ENCODE measurements at regions of chr12 and their contacts with region 1.

Region 1: GRCh38 chr12:55926738-55927587 is 731 bp downstream of the PYM1 start:
- DNase-seq: peak; percentile 97
- ATAC-seq: peak; percentile 43
- H3K4me3 Mint-ChIP-seq: peak overlapping the region; percentile 95
- H3K27ac Mint-ChIP-seq: peak overlapping the region; percentile 99
- H3K4me1 Mint-ChIP-seq: peaks cover 43% of the 10 kb centered on the region
- H3K27me3 Mint-ChIP-seq: no peaks in the 10 kb centered on the region

Region 2: GRCh38 chr12:55829967-55830600 is 96.9 kb before region 1 on chr12:
- CTCF ChIA-PET with region 1: interaction called, 28 read pairs
- POLR2A ChIA-PET with region 1: interaction called, 50 read pairs
- DNase-seq: peak; percentile 55
- ATAC-seq: peak; percentile 35
- H3K4me3 Mint-ChIP-seq: peak overlapping the region; percentile 99
- H3K27ac Mint-ChIP-seq: peak overlapping the region; percentile 97
- H3K4me1 Mint-ChIP-seq: peaks cover 41% of the 10 kb centered on the region
- H3K27me3 Mint-ChIP-seq: no peaks in the 10 kb centered on the region

Region 3: GRCh38 chr12:55915482-55915859 is 11.5 kb before region 1 on chr12:
- CTCF ChIA-PET with region 1: interaction called, 28 read pairs
- POLR2A ChIA-PET with region 1: interaction called, 34 read pairs
- DNase-seq: no peak
- ATAC-seq: no peak
- H3K4me3 Mint-ChIP-seq: no peak overlapping the region
- H3K27ac Mint-ChIP-seq: peak overlapping the region; percentile 15
- H3K4me1 Mint-ChIP-seq: peaks cover 35% of the 10 kb centered on the region
- H3K27me3 Mint-ChIP-seq: no peaks in the 10 kb centered on the region

Region 4: DNA sequence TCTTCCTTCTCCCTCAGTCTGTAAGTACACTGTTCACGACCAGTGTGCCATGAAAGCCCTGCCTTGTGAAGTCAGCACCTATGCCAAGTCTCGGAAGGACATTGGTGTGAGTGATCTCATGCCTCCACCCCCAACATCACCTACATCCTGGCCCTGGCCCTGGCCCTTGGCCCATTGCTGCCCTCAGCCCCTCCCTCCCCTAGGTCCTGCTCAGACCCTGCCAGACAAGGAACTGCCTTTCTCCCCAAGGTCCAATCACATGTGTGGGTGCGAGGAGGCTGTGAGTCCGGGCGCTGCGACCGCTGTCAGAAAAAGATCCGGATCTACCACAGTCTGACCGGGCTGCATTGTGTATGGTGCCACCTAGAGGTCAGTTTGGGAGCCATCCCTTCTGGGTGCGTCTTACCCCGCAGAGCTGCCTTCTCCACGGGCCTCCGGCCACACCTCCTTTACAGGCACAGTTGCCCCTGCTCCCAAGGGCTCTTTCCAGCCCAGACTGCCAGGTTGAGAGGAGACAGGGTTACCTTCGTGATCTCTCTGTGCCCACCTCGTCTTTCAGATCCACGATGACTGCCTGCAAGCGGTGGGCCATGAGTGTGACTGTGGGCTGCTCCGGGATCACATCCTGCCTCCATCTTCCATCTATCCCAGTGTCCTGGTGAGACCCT is 13.2 kb after region 1 on chr12:
- CTCF ChIA-PET with region 1: interaction called, 75 read pairs
- POLR2A ChIA-PET with region 1: interaction called, 139 read pairs
- DNase-seq: peak; percentile 90
- ATAC-seq: peak; percentile 93
- H3K4me3 Mint-ChIP-seq: no peak overlapping the region
- H3K27ac Mint-ChIP-seq: peak overlapping the region; percentile 69
- H3K4me1 Mint-ChIP-seq: peaks cover 67% of the 10 kb centered on the region
- H3K27me3 Mint-ChIP-seq: no peaks in the 10 kb centered on the region

Region 5: GRCh38 chr12:56020423-56021184 is 93.6 kb after region 1 on chr12 and contains the start of gene IKZF4:
- CTCF ChIA-PET with region 1: no interaction called
- POLR2A ChIA-PET with region 1: no interaction called
- DNase-seq: peak; percentile 42
- ATAC-seq: peak; percentile 37
- H3K4me3 Mint-ChIP-seq: peak within 1 kb of the TSS; percentile 88
- H3K27ac Mint-ChIP-seq: peak within 1 kb of the TSS; percentile 96
- H3K4me1 Mint-ChIP-seq: peaks cover 53% of the 10 kb centered on the region
- H3K27me3 Mint-ChIP-seq: no peaks in the 10 kb centered on the region
- total RNA-seq, gene IKZF4: 19.9 to 20.7 TPM

Region 6: GRCh38 chr12:56078990-56079664 is 152.2 kb after region 1 on chr12:
- CTCF ChIA-PET with region 1: no interaction called
- POLR2A ChIA-PET with region 1: no interaction called
- DNase-seq: peak; percentile 64
- ATAC-seq: peak; percentile 66
- H3K4me3 Mint-ChIP-seq: peak overlapping the region; percentile 79
- H3K27ac Mint-ChIP-seq: peak overlapping the region; percentile 43
- H3K4me1 Mint-ChIP-seq: peaks cover 21% of the 10 kb centered on the region
- H3K27me3 Mint-ChIP-seq: peaks cover 23% of the 10 kb centered on the region

Region 7: DNA sequence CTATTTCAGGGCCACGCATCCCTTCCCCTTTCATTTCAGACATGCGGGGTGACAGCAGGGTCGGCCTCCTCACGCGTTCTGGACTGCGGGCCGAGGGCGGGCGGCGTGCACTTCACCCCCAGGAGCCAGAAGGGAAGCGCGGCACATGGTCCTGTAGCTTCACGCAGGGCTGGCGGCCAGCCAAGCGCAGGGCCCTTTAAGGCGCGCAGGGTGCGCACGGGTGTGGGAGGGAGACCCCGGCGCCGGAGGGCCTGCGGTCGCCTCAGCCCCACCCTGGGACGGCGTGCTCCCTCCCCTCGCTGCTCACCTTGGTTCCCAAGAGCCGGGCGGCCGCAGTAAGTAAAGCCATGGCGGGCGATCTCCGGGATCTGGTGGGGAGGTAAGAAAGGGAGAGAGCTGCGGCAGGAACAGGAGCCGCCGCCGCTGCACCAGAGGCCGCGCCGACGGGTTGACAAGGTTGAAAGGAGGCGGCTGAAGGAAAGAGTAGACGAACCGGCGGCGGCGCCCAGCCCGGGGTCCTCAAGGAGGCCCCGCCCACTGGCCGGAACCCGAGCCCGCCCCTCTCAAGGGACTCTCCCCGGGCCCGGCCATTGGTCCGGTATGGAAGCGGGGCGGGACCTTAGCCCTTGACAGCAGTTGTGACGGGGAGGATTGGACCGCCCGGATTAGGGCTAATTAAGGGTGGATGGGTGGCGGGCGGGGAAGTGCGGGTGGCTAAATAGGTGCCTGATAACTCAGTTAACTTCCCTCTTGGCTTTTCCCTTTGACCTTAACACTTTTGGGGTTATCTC is 373.1 kb after region 1 on chr12 and contains the start of gene CS:
- CTCF ChIA-PET with region 1: no interaction called
- POLR2A ChIA-PET with region 1: no interaction called
- DNase-seq: peak; percentile 99
- ATAC-seq: peak; percentile 97
- H3K4me3 Mint-ChIP-seq: peak within 1 kb of the TSS; percentile 97
- H3K27ac Mint-ChIP-seq: peak within 1 kb of the TSS; percentile 91
- H3K4me1 Mint-ChIP-seq: peaks cover 52% of the 10 kb centered on the region
- H3K27me3 Mint-ChIP-seq: no peaks in the 10 kb centered on the region
- total RNA-seq, gene CS: 218 to 228 TPM

Region 8: GRCh38 chr12:56657416-56658379 is 730.7 kb after region 1 on chr12:
- CTCF ChIA-PET with region 1: no interaction called
- POLR2A ChIA-PET with region 1: no interaction called
- DNase-seq: no peak
- ATAC-seq: peak; percentile 27
- H3K4me3 Mint-ChIP-seq: no peak overlapping the region
- H3K27ac Mint-ChIP-seq: no peak overlapping the region
- H3K4me1 Mint-ChIP-seq: peaks cover 2% of the 10 kb centered on the region
- H3K27me3 Mint-ChIP-seq: no peaks in the 10 kb centered on the region